ENCODE measurements at regions of chr9 and their contacts with region 1.

Region 1: GRCh38 chr9:130107234-130107861 is 53.6 kb downstream of the GPR107 start:
- DNase-seq: peak; percentile 27
- ATAC-seq: peak; percentile 93
- H3K4me3 ChIP-seq: no peak overlapping the region
- H3K27ac ChIP-seq: no peak overlapping the region
- H3K4me1 ChIP-seq: no peaks in the 10 kb centered on the region
- H3K27me3 ChIP-seq: no peaks in the 10 kb centered on the region
- CTCF ChIP-seq: peak; percentile 82

Region 2: GRCh38 chr9:130243015-130243734 is 135.8 kb after region 1 on chr9:
- CTCF ChIA-PET with region 1: no interaction called
- POLR2A ChIA-PET with region 1: no interaction called
- in situ Hi-C with region 1: no loop called
- intact Hi-C with region 1: loop called (anchors 5 kb)
- DNase-seq: no peak
- ATAC-seq: peak; percentile 79
- H3K4me3 ChIP-seq: peak overlapping the region in 1 of 2 experiments; percentile 26; a peak in 1 of 4 replicates
- H3K27ac ChIP-seq: no peak overlapping the region
- H3K4me1 ChIP-seq: no peaks in the 10 kb centered on the region
- H3K27me3 ChIP-seq: no peaks in the 10 kb centered on the region
- CTCF ChIP-seq: peak; percentile 91

Region 3: DNA sequence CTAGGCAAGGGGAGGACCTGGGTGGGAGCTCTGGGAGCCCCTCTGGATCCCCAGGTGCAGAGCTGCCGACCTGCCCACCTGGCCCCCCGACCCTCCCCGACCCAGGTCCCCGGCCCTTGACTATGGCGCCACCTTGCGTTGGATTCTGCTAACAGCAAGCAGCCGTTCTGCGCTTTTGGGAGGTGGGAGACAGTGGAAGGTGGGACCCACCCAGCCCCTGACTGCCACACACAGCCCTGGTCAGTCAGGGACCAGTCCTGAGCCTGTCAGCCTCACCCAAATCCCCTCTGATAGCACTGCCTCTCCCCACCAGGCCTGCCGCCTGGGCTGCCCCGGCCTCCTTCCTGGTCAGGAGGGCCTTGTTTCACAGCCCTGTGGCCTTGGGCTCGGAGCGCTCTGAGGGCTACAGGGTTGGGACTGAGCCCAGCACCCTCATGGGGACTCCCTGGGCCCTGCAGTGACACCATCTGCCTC is 236.1 kb after region 1 on chr9:
- CTCF ChIA-PET with region 1: no interaction called
- POLR2A ChIA-PET with region 1: no interaction called
- in situ Hi-C with region 1: no loop called
- intact Hi-C with region 1: loop called (anchors 5 kb)
- DNase-seq: no peak
- ATAC-seq: no peak
- H3K4me3 ChIP-seq: no peak overlapping the region
- H3K27ac ChIP-seq: no peak overlapping the region
- H3K4me1 ChIP-seq: no peaks in the 10 kb centered on the region; the same call in 1 of the 2 replicates
- H3K27me3 ChIP-seq: no peaks in the 10 kb centered on the region
- CTCF ChIP-seq: peak; percentile 91

Measured in Panc1 (cell line).